ENCODE measurements at regions of chr20 and their contacts with region 1.

Region 1: DNA sequence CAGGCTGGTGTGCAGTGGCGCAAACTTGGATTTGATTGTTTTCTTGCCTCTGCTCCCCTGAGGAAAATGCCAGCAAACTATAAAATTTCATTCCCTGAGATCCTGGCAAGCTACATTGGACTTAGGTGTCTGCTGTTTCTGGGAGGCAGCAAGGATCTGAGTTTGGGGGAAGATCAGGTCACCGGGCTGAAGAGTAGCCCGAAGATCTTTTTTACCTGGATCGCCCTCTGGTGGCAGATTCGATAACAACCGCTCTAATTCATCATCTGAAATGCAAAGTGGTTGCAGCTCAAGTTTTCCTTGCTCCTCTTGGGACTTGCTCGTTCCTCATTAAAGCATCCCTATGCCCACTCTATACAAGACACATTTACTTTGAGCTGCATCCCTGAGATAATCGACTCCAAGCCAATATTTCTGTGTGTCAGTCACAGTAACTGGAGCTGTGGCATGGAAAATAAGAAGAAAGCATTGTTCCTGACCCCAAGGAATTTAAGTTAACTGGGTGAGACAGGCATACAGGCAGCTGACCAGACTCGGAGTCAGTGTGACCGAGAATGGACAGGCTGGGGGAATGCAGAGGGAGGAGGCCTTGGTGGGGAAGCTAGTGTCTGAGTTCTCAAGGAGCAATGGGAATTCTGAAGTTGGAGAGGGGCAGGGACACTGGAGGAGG is 131.8 kb upstream of the PROKR2 start:
- DNase-seq: peak; percentile 6 to 34 (median 24)
- H3K4me3 ChIP-seq: no peak overlapping the region
- H3K4me3 Mint-ChIP-seq: peak overlapping the region in 1 of 2 donors; percentile 63
- H3K27ac ChIP-seq: no peak overlapping the region
- H3K27ac Mint-ChIP-seq: no peak overlapping the region
- H3K4me1 ChIP-seq: no peaks in the 10 kb centered on the region
- H3K4me1 Mint-ChIP-seq: no peaks in the 10 kb centered on the region
- H3K27me3 ChIP-seq: peaks cover 6 to 11% of the 10 kb centered on the region in 2 donors
- H3K27me3 Mint-ChIP-seq: peaks cover 10 to 18% (median 15%) of the 10 kb centered on the region in 3 donors
- CTCF ChIP-seq: peak; percentile 84

Region 2: GRCh38 chr20:5205348-5206210 is 243.0 kb before region 1 on chr20:
- intact Hi-C with region 1: loop called (anchors 2 to 10 kb)
- DNase-seq: peak; percentile 53 to 64 (median 61)
- H3K4me3 ChIP-seq: no peak overlapping the region
- H3K4me3 Mint-ChIP-seq: no peak overlapping the region
- H3K27ac ChIP-seq: no peak overlapping the region
- H3K27ac Mint-ChIP-seq: no peak overlapping the region
- H3K4me1 ChIP-seq: no peaks in the 10 kb centered on the region
- H3K4me1 Mint-ChIP-seq: no peaks in the 10 kb centered on the region
- H3K27me3 ChIP-seq: no peaks in the 10 kb centered on the region
- H3K27me3 Mint-ChIP-seq: peaks cover 0 to 2% (median 0%) of the 10 kb centered on the region in 3 donors
- CTCF ChIP-seq: peak; percentile 87

Region 3: GRCh38 chr20:5215672-5216304 is 232.8 kb before region 1 on chr20:
- intact Hi-C with region 1: loop called in 1 of 2 experiments (anchors 10 kb)
- DNase-seq: no peak
- H3K4me3 ChIP-seq: no peak overlapping the region
- H3K4me3 Mint-ChIP-seq: no peak overlapping the region
- H3K27ac ChIP-seq: peak overlapping the region in 1 of 2 donors; percentile 5
- H3K27ac Mint-ChIP-seq: peak overlapping the region in 3 of 7 donors; percentile 3 to 68 (median 61)
- H3K4me1 ChIP-seq: peaks cover 11 to 20% of the 10 kb centered on the region in 2 donors
- H3K4me1 Mint-ChIP-seq: peaks cover 26% of the 10 kb centered on the region
- H3K27me3 ChIP-seq: no peaks in the 10 kb centered on the region
- H3K27me3 Mint-ChIP-seq: peaks cover 0 to 2% (median 2%) of the 10 kb centered on the region in 3 donors
- CTCF ChIP-seq: no peak

Measured in CD14-positive monocyte (primary cell).